Colonic mucosa (tissue), 4 donors: ENCODE measurements at regions of chr5 and their contacts with region 1.

Region 1: DNA sequence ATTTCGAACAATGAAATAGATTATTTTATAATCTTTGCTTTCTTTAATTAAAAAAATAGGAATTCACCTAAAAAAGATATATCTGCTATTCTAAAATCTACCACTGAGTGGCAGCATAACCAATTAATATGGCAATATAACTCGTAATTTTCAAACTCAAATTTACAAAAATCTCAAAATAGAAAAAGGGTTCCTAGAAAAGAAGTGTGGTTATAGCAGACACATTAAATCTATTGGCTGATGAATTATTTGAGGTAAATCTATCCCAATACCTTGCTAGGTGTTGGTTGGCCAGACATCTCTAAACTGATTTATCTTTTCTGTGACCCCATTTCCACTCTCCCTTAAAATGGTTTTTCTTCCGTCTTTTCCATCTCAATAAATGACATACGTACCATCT is 30.2 kb upstream of the NRG2 start:
- DNase-seq: no peak
- H3K4me3 ChIP-seq: no peak overlapping the region
- H3K27ac ChIP-seq: no peak overlapping the region
- H3K4me1 ChIP-seq: no peaks in the 10 kb centered on the region
- H3K27me3 ChIP-seq: no peaks in the 10 kb centered on the region
- CTCF ChIP-seq: peak; percentile 63

Region 2: GRCh38 chr5:140107312-140108083 is 34.2 kb after region 1 on chr5:
- intact Hi-C with region 1: loop called (anchors 5 kb)
- DNase-seq: peak; percentile 93
- H3K4me3 ChIP-seq: peak overlapping the region; percentile 59
- H3K27ac ChIP-seq: peak overlapping the region; percentile 96
- H3K4me1 ChIP-seq: no peaks in the 10 kb centered on the region
- H3K27me3 ChIP-seq: no peaks in the 10 kb centered on the region
- CTCF ChIP-seq: no peak

Region 3: GRCh38 chr5:140145818-140146522 is 72.7 kb after region 1 on chr5:
- intact Hi-C with region 1: loop called (anchors 2 kb)
- DNase-seq: peak; percentile 59
- H3K4me3 ChIP-seq: peak overlapping the region; percentile 23
- H3K27ac ChIP-seq: no peak overlapping the region
- H3K4me1 ChIP-seq: peaks cover 7% of the 10 kb centered on the region
- H3K27me3 ChIP-seq: no peaks in the 10 kb centered on the region
- CTCF ChIP-seq: peak; percentile 74

Region 4: GRCh38 chr5:140157032-140157803 is 83.9 kb after region 1 on chr5:
- intact Hi-C with region 1: loop called (anchors 2 kb)
- DNase-seq: peak; percentile 93
- H3K4me3 ChIP-seq: peak overlapping the region; percentile 31
- H3K27ac ChIP-seq: no peak overlapping the region
- H3K4me1 ChIP-seq: peaks cover 3% of the 10 kb centered on the region
- H3K27me3 ChIP-seq: no peaks in the 10 kb centered on the region
- CTCF ChIP-seq: peak; percentile 87